ENCODE measurements at regions of chr15 and their contacts with region 1.

Region 1: DNA sequence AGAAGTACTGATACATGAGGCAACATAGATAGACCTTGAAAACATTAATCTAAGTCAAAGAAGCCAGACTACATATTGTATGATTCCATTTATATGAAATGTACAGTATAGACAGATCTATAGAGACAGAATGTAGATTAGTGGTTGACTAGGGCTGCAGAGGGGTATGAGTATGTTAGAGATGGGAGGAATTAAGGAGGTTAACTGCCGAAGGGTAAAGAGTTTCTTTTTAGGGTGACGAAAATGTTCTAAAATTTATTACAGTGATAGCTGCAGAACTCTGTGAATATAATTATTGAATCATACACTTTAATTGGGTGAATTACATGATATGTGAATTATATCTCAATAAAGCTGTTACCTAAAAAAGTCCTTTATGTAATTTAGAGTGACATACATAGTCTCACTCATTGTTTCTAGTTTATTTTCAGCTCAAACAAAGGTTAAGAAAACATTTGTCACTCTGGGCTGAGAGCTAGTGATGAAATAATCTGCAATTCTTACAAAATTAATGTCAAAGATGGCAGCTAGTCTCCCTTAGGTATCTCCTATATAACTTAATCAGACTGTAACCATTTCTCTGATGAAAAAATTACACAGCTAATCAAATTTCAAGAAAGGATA is 61.4 kb downstream of the DENND4A start:
- DNase-seq: no peak
- H3K4me3 ChIP-seq: no peak overlapping the region
- H3K27ac ChIP-seq: peak overlapping the region; percentile 49
- H3K4me1 ChIP-seq: peaks cover 10% of the 10 kb centered on the region
- H3K27me3 ChIP-seq: no peaks in the 10 kb centered on the region
- CTCF ChIP-seq: no peak

Region 2: GRCh38 chr15:65460741-65461347 is 269.8 kb before region 1 on chr15:
- CTCF ChIA-PET with region 1: interaction called, 19 read pairs
- POLR2A ChIA-PET with region 1: no interaction called
- intact Hi-C with region 1: no loop called
- DNase-seq: no peak
- H3K4me3 ChIP-seq: no peak overlapping the region
- H3K27ac ChIP-seq: no peak overlapping the region
- H3K4me1 ChIP-seq: no peaks in the 10 kb centered on the region
- H3K27me3 ChIP-seq: no peaks in the 10 kb centered on the region
- CTCF ChIP-seq: no peak

Region 3: GRCh38 chr15:65762914-65763787 is 32.5 kb after region 1 on chr15:
- CTCF ChIA-PET with region 1: no interaction called
- POLR2A ChIA-PET with region 1: interaction called, 17 read pairs
- intact Hi-C with region 1: no loop called
- DNase-seq: no peak
- H3K4me3 ChIP-seq: no peak overlapping the region
- H3K27ac ChIP-seq: no peak overlapping the region
- H3K4me1 ChIP-seq: no peaks in the 10 kb centered on the region
- H3K27me3 ChIP-seq: no peaks in the 10 kb centered on the region
- CTCF ChIP-seq: no peak

Region 4: GRCh38 chr15:65909831-65910230 is 179.2 kb after region 1 on chr15:
- CTCF ChIA-PET with region 1: no interaction called
- POLR2A ChIA-PET with region 1: no interaction called
- intact Hi-C with region 1: no loop called
- DNase-seq: no peak
- H3K4me3 ChIP-seq: no peak overlapping the region
- H3K27ac ChIP-seq: no peak overlapping the region
- H3K4me1 ChIP-seq: peaks cover 30% of the 10 kb centered on the region
- H3K27me3 ChIP-seq: no peaks in the 10 kb centered on the region
- CTCF ChIP-seq: no peak